ENCODE measurements at regions of chr16 and their contacts with region 1.

Region 1: GRCh38 chr16:88811769-88812512 is at the start of gene APRT:
- DNase-seq: peak; percentile 93 to 99 (median 98)
- ATAC-seq: peak; percentile 90
- H3K4me3 ChIP-seq: peak within 1 kb of the TSS; percentile 75
- H3K4me3 Mint-ChIP-seq: peak within 1 kb of the TSS; percentile 99
- H3K27ac ChIP-seq: peak within 1 kb of the TSS; percentile 64 to 70
- H3K27ac Mint-ChIP-seq: peak within 1 kb of the TSS; percentile 95
- H3K4me1 ChIP-seq: peaks cover 29% of the 10 kb centered on the region
- H3K4me1 Mint-ChIP-seq: peaks cover 4% of the 10 kb centered on the region
- H3K27me3 ChIP-seq: no peaks in the 10 kb centered on the region
- H3K27me3 Mint-ChIP-seq: no peaks in the 10 kb centered on the region
- CTCF ChIP-seq: no peak
- total RNA-seq, gene APRT: 153 to 154 TPM

Region 2: GRCh38 chr16:88633684-88634140 is 178.2 kb before region 1 on chr16:
- CTCF ChIA-PET with region 1: no interaction called
- POLR2A ChIA-PET with region 1: no interaction called
- intact Hi-C with region 1: no loop called
- DNase-seq: peak in 11 of 14 experiments; percentile 23 to 81 (median 45)
- ATAC-seq: peak; percentile 57
- H3K4me3 ChIP-seq: peak overlapping the region; percentile 63
- H3K4me3 Mint-ChIP-seq: peak overlapping the region; percentile 80
- H3K27ac ChIP-seq: peak overlapping the region; percentile 27 to 49
- H3K27ac Mint-ChIP-seq: peak overlapping the region; percentile 58
- H3K4me1 ChIP-seq: peaks cover 57% of the 10 kb centered on the region
- H3K4me1 Mint-ChIP-seq: peaks cover 28% of the 10 kb centered on the region
- H3K27me3 ChIP-seq: peaks cover under 1 to 7% of the 10 kb centered on the region in 2 experiments
- H3K27me3 Mint-ChIP-seq: peaks cover 17% of the 10 kb centered on the region
- CTCF ChIP-seq: no peak

Region 3: DNA sequence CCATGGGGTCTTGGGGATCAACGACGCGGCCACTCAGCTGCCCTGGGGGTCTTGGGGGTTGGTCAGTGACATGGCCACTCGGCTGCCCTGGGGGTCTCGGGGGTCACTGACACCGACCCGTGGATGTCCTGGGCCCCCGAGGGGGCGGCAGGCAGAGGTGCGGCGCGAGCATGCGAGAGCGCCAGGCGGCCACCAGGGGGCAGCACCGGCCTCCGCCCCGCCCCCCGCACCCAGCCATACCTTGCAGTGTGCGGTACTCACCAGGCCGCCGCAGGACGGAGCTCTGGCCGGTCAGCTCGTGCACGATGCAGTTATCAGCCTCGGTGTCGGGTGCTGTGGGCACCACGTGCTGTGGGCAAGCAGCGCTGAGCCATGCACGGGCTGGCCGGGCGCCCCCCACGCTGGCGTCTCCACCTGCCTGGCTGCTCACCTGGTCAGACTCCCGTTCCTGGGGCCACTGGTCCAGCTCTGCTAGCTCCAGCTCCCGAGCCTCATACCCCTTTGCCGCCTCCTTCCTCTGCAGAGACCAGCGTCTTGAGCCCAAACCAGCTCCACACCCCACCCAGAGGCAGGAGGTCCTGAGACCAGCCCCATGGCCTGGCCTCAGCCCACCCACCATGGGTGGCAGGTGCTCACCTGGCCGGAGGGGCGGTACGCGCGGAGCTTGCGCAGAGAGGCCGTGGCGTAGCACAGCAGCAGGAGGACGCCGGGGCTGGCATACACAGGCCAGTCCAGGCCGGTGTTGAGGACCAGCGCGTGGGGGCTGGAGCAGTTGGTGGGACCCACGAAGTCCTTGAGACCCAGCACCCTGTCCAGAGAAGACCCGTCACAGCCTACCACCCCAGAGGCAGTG is 74.4 kb before region 1 on chr16:
- CTCF ChIA-PET with region 1: interaction called, 16 read pairs
- POLR2A ChIA-PET with region 1: interaction called, 8 read pairs
- intact Hi-C with region 1: no loop called
- DNase-seq: peak; percentile 44 to 89 (median 72)
- ATAC-seq: peak; percentile 98
- H3K4me3 ChIP-seq: no peak overlapping the region
- H3K4me3 Mint-ChIP-seq: no peak overlapping the region
- H3K27ac ChIP-seq: no peak overlapping the region
- H3K27ac Mint-ChIP-seq: no peak overlapping the region
- H3K4me1 ChIP-seq: peaks cover 15% of the 10 kb centered on the region
- H3K4me1 Mint-ChIP-seq: no peaks in the 10 kb centered on the region
- H3K27me3 ChIP-seq: no peaks in the 10 kb centered on the region
- H3K27me3 Mint-ChIP-seq: no peaks in the 10 kb centered on the region
- CTCF ChIP-seq: peak; percentile 98

Region 4: GRCh38 chr16:88791755-88792550 is 20.0 kb before region 1 on chr16:
- CTCF ChIA-PET with region 1: interaction called, 5 read pairs
- POLR2A ChIA-PET with region 1: interaction called, 22 read pairs
- intact Hi-C with region 1: no loop called
- DNase-seq: peak in 1 of 14 experiments; percentile 38
- ATAC-seq: no peak
- H3K4me3 ChIP-seq: no peak overlapping the region
- H3K4me3 Mint-ChIP-seq: peak overlapping the region; percentile 30
- H3K27ac ChIP-seq: peak overlapping the region; percentile 45 to 70
- H3K27ac Mint-ChIP-seq: peak overlapping the region; percentile 86
- H3K4me1 ChIP-seq: peaks cover 73% of the 10 kb centered on the region
- H3K4me1 Mint-ChIP-seq: peaks cover 59% of the 10 kb centered on the region
- H3K27me3 ChIP-seq: no peaks in the 10 kb centered on the region
- H3K27me3 Mint-ChIP-seq: no peaks in the 10 kb centered on the region
- CTCF ChIP-seq: no peak

Region 5: GRCh38 chr16:88941913-88942909 is 130.3 kb after region 1 on chr16:
- CTCF ChIA-PET with region 1: no interaction called
- POLR2A ChIA-PET with region 1: no interaction called
- intact Hi-C with region 1: loop called in 1 of 2 experiments (anchors 5 kb)
- DNase-seq: peak; percentile 31 to 79 (median 51)
- ATAC-seq: peak; percentile 74
- H3K4me3 ChIP-seq: no peak overlapping the region
- H3K4me3 Mint-ChIP-seq: peak overlapping the region; percentile 56
- H3K27ac ChIP-seq: no peak overlapping the region
- H3K27ac Mint-ChIP-seq: no peak overlapping the region
- H3K4me1 ChIP-seq: peaks cover 40% of the 10 kb centered on the region
- H3K4me1 Mint-ChIP-seq: peaks cover 8% of the 10 kb centered on the region
- H3K27me3 ChIP-seq: peaks cover 45 to 53% of the 10 kb centered on the region in 2 experiments
- H3K27me3 Mint-ChIP-seq: peaks cover 48% of the 10 kb centered on the region
- CTCF ChIP-seq: peak; percentile 58

Region 6: DNA sequence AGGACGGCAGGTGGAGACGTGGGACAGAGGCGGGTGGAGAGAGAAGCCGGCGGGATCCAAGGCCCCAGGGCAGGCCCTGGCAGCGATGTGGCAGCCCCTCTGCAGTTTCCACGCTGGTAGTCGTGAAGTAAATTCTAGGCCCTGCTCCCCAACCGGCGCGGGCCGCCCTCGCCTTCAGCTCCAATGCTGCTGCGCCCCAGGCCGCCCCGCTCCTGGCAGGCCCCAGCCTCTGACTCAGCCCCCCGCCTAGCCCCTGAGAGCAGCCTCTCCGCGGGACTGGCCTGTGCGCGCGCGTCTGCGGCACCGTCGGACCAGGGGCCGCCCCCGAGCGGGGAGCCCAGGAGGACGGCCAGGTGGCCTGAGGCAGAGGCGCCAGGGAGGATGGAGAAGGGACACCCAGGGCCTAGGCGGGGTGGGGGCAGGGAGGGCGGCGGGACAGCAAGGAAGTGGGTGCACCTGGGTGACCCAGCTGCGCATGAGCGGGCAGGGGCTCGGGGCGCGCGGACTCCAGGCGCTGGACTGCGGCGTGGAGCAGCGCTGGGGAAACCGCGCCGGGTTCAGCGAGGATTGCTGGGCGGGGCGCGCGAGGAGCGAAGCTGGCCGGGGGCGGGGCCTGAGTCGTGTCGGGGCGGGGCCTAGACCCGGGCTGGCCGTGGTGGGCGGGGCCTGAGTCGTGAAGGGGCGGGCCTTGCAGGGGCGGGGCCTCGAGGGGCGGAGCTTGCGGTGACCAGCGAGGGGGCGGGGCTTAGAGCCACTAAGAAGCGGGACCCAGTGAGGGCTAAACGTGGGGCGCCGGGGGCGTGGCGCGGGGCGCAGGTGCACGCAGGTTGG is 435.2 kb after region 1 on chr16:
- CTCF ChIA-PET with region 1: no interaction called
- POLR2A ChIA-PET with region 1: interaction called, 10 read pairs
- intact Hi-C with region 1: no loop called
- DNase-seq: peak; percentile 91 to 100 (median 96)
- ATAC-seq: peak; percentile 91
- H3K4me3 ChIP-seq: peak overlapping the region; percentile 35
- H3K4me3 Mint-ChIP-seq: peak overlapping the region; percentile 82
- H3K27ac ChIP-seq: no peak overlapping the region
- H3K27ac Mint-ChIP-seq: peak overlapping the region; percentile 72
- H3K4me1 ChIP-seq: peaks cover 27% of the 10 kb centered on the region
- H3K4me1 Mint-ChIP-seq: peaks cover 6% of the 10 kb centered on the region
- H3K27me3 ChIP-seq: no peaks in the 10 kb centered on the region
- H3K27me3 Mint-ChIP-seq: no peaks in the 10 kb centered on the region
- CTCF ChIP-seq: no peak

Measured in CD4-positive, alpha-beta T cell (primary cell).